CD8-positive, alpha-beta memory T cell (primary cell): ENCODE measurements at regions of chr17 and their contacts with region 1.

Region 1: DNA sequence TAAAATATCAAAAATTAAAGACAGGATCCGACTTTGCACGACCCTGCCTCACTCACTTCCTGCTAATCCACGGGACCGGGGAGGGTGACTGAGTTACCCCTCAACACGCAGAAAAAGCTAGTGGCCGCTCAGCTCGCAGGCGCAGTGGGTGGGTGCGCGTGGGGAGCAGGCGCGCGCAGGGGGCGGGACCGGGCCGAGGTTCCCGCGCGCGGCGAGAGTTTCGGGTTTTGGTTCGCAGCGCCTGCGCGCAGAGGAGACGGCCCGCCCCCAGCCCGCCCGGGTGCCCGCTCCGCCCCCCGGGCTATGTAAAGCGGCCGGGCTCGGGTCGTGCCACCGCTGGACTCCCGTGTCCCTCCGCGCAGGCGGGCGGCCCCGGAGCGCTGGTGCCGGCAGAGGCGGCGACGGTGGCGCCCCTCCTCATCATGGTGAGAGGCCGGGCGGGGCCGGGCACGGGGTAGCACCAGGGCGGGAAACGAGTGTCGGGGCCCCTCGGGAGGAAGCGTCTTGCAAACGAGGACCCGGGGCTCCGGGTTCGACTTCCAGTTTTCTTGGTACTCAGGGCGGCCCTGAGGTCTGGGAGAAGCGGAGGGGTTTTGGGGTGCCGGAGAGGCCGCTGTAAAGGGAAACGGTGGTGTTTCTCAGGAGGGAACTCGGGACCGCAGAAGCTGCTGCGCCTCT is at the start of gene CNP:
- DNase-seq: peak; percentile 87 to 92 (median 89)
- H3K4me3 ChIP-seq: peak within 1 kb of the TSS; percentile 69
- H3K4me3 Mint-ChIP-seq: peak within 1 kb of the TSS; percentile 82 to 94 (median 88)
- H3K27ac ChIP-seq: peak within 1 kb of the TSS; percentile 71
- H3K27ac Mint-ChIP-seq: peak within 1 kb of the TSS; percentile 79 to 99 (median 91)
- H3K4me1 ChIP-seq: peaks cover 20% of the 10 kb centered on the region
- H3K4me1 Mint-ChIP-seq: peaks cover 29 to 53% (median 35%) of the 10 kb centered on the region in 3 donors
- H3K27me3 ChIP-seq: no peaks in the 10 kb centered on the region
- H3K27me3 Mint-ChIP-seq: no peaks in the 10 kb centered on the region
- total RNA-seq, gene CNP: 70.3 to 71.6 TPM

Region 2: GRCh38 chr17:41918314-41919164 is 48.1 kb before region 1 on chr17 and contains the start of gene ACLY:
- CTCF ChIA-PET with region 1: interaction called, 3 read pairs
- POLR2A ChIA-PET with region 1: interaction called, 10 read pairs
- DNase-seq: peak; percentile 91 to 96 (median 94)
- H3K4me3 ChIP-seq: peak within 1 kb of the TSS; percentile 90
- H3K4me3 Mint-ChIP-seq: peak within 1 kb of the TSS; percentile 86 to 97 (median 91)
- H3K27ac ChIP-seq: peak within 1 kb of the TSS; percentile 79
- H3K27ac Mint-ChIP-seq: peak within 1 kb of the TSS; percentile 77 to 91 (median 81)
- H3K4me1 ChIP-seq: peaks cover 15% of the 10 kb centered on the region
- H3K4me1 Mint-ChIP-seq: peaks cover 35 to 49% (median 37%) of the 10 kb centered on the region in 3 donors
- H3K27me3 ChIP-seq: no peaks in the 10 kb centered on the region
- H3K27me3 Mint-ChIP-seq: no peaks in the 10 kb centered on the region
- total RNA-seq, gene ACLY: 188 to 189 TPM

Region 3: DNA sequence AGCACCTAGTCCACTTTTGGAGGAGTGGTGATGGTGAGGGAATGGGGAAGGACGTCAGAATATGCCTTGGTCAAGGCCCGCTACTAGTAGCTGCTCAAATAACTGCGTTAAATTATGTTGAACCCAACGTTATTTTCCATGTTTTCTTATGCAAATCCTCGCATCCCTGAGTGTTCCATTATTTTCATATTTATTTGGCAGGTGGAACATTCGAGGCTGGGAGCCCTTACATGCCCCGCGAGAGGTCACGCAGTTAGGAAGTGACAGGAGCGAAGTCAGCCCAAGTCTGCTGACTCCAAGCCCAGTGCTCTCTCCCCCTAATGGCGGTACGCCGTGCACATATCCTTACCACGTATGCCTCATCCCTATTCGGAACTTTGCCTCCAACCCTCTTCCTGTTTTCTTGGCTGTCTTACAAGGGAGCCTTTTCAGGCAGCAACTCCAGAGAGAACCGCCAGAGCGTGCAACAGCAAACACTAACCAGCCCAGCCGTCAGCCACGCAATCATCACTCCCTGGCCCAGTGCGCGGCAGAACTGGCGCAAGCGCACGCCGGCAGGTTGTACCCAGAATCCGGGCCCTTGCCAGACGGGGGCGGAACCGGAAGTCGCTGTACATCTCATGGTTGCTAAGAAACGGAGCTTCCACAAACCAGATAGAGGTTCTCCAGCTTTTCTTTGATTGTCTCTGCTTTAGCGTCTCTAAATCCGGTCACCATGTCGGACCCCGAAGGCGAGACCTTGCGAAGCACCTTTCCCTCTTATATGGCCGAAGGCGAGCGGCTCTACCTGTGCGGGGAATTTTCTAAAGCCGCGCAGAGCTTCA is 36.4 kb before region 1 on chr17 and contains the start of gene ODAD4:
- CTCF ChIA-PET with region 1: interaction called, 4 read pairs
- POLR2A ChIA-PET with region 1: interaction called, 13 read pairs
- DNase-seq: peak; percentile 94 to 97 (median 96)
- H3K4me3 ChIP-seq: peak within 1 kb of the TSS; percentile 72
- H3K4me3 Mint-ChIP-seq: peak within 1 kb of the TSS; percentile 88 to 97 (median 94)
- H3K27ac ChIP-seq: peak within 1 kb of the TSS; percentile 90
- H3K27ac Mint-ChIP-seq: peak within 1 kb of the TSS; percentile 90 to 100 (median 97)
- H3K4me1 ChIP-seq: peaks cover 20% of the 10 kb centered on the region
- H3K4me1 Mint-ChIP-seq: peaks cover 19 to 26% (median 24%) of the 10 kb centered on the region in 3 donors
- H3K27me3 ChIP-seq: no peaks in the 10 kb centered on the region
- H3K27me3 Mint-ChIP-seq: peaks cover 4 to 9% of the 10 kb centered on the region in 2 donors
- total RNA-seq, gene ODAD4: 0.53 to 0.57 TPM

Region 4: DNA sequence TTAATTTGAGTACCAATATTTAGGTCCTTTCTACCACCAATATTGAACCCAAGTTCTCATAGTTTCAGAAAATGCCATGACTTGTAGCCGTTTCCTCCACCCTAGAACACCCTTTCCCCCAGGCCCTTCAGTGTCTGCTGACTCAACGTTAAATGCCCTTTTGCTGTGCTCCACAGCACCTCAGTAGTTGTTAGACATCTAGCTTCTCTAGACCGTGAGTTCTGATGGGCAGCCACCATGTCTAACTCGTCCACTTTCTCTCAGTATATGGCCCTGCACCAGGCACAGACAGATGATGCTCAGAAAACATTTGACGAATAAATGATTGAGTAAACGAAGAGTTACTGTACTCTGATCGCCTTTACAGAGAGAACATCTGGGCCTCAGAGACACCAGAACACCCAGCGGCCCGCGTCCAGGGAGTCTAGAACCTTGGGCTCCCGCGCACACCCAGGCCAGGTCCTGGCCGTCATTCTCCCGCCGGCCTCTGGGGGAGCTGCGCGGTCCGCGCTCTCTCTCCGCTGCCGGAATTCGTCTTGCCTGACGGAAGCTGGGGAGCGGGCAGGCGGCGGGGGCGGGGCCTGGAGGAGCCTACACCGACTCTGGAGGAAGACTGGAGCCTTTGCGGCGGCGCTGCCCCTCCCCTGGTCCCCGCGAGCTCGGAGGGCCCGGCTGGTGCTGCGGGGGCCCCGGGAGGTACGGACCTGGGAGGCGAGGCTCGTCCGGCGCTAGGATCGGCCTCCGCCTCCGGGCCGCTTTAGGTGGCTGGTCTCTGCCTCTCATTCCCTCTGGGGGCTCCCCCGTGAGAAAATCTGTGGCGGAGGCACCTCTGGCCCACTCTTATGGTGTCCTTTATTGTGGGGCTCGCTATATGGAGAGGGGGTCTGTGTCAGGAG is 53.2 kb after region 1 on chr17 and contains the start of gene NKIRAS2:
- CTCF ChIA-PET with region 1: interaction called, 12 read pairs
- POLR2A ChIA-PET with region 1: interaction called, 35 read pairs
- DNase-seq: peak; percentile 86 to 95 (median 92)
- H3K4me3 ChIP-seq: peak within 1 kb of the TSS; percentile 76
- H3K4me3 Mint-ChIP-seq: peak within 1 kb of the TSS; percentile 86 to 100 (median 97)
- H3K27ac ChIP-seq: peak within 1 kb of the TSS; percentile 68
- H3K27ac Mint-ChIP-seq: peak within 1 kb of the TSS; percentile 74 to 99 (median 90)
- H3K4me1 ChIP-seq: peaks cover 54% of the 10 kb centered on the region
- H3K4me1 Mint-ChIP-seq: peaks cover 55 to 69% (median 68%) of the 10 kb centered on the region in 3 donors
- H3K27me3 ChIP-seq: no peaks in the 10 kb centered on the region
- H3K27me3 Mint-ChIP-seq: peaks cover 0 to 2% of the 10 kb centered on the region in 2 donors
- total RNA-seq, gene NKIRAS2: 29.4 to 31.3 TPM

Region 5: GRCh38 chr17:42067351-42068091 is 100.9 kb after region 1 on chr17:
- CTCF ChIA-PET with region 1: interaction called, 14 read pairs
- POLR2A ChIA-PET with region 1: interaction called, 4 read pairs
- DNase-seq: peak; percentile 43 to 78 (median 62)
- H3K4me3 ChIP-seq: no peak overlapping the region
- H3K4me3 Mint-ChIP-seq: no peak overlapping the region
- H3K27ac ChIP-seq: no peak overlapping the region
- H3K27ac Mint-ChIP-seq: peak overlapping the region in 1 of 8 donors; percentile 60
- H3K4me1 ChIP-seq: peaks cover 20% of the 10 kb centered on the region
- H3K4me1 Mint-ChIP-seq: peaks cover 9 to 20% (median 13%) of the 10 kb centered on the region in 3 donors
- H3K27me3 ChIP-seq: peaks cover 9% of the 10 kb centered on the region
- H3K27me3 Mint-ChIP-seq: peaks cover 17 to 24% of the 10 kb centered on the region in 2 donors

Region 6: DNA sequence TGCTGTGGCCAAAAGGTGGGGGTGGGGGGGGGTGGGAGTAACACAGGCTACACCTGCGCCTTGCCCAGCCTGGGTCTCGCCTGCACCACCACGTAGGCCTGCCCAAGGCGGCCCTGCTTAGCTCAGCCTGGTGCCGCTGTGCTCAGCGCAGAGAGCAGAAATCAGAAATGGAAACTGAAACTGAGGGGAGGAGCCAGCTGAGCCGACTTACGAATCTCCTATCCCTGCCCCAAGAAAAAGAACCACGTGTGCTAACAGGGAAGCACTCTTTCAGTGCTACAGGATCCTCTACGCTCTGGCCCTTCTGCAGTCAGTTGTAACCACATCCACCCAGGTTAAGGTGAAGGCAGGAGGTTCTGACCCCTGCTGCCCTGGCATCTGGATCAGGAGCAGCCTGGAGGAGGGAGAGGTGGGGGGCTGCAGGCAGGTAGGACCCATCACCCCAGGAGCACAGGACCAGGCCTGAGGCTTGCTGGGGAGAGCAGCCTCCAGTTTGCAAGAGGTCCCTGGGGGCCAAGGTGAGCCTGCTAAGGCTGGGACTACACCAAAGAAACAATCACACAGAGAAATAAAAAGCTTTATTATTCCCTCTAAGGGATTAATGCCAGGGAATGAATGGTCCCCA is 146.1 kb after region 1 on chr17 and contains the start of gene DHX58:
- CTCF ChIA-PET with region 1: interaction called, 11 read pairs
- POLR2A ChIA-PET with region 1: interaction called, 10 read pairs
- DNase-seq: peak; percentile 55 to 86 (median 76)
- H3K4me3 ChIP-seq: peak within 1 kb of the TSS; percentile 76
- H3K4me3 Mint-ChIP-seq: peak within 1 kb of the TSS; percentile 81 to 93 (median 90)
- H3K27ac ChIP-seq: peak within 1 kb of the TSS; percentile 63
- H3K27ac Mint-ChIP-seq: peak within 1 kb of the TSS; percentile 86 to 98 (median 96)
- H3K4me1 ChIP-seq: peaks cover 27% of the 10 kb centered on the region
- H3K4me1 Mint-ChIP-seq: peaks cover 33 to 54% (median 34%) of the 10 kb centered on the region in 3 donors
- H3K27me3 ChIP-seq: no peaks in the 10 kb centered on the region
- H3K27me3 Mint-ChIP-seq: no peaks in the 10 kb centered on the region
- total RNA-seq, gene DHX58: 8.1 to 9.7 TPM

Region 7: GRCh38 chr17:42155636-42156045 is 189.0 kb after region 1 on chr17:
- CTCF ChIA-PET with region 1: no interaction called
- POLR2A ChIA-PET with region 1: interaction called, 10 read pairs
- DNase-seq: no peak
- H3K4me3 ChIP-seq: peak overlapping the region; percentile 49
- H3K4me3 Mint-ChIP-seq: peak overlapping the region; percentile 60 to 96 (median 95)
- H3K27ac ChIP-seq: no peak overlapping the region
- H3K27ac Mint-ChIP-seq: peak overlapping the region in 4 of 8 donors; percentile 23 to 95 (median 64)
- H3K4me1 ChIP-seq: peaks cover 31% of the 10 kb centered on the region
- H3K4me1 Mint-ChIP-seq: peaks cover 33 to 46% (median 41%) of the 10 kb centered on the region in 3 donors
- H3K27me3 ChIP-seq: no peaks in the 10 kb centered on the region
- H3K27me3 Mint-ChIP-seq: no peaks in the 10 kb centered on the region